A673 (cell line): ENCODE measurements at regions of chr1 and their contacts with region 1.

Region 1: GRCh38 chr1:45656573-45657226 is 29.6 kb downstream of the GPBP1L1 start:
- DNase-seq: no peak
- H3K4me3 ChIP-seq: no peak overlapping the region
- H3K27ac ChIP-seq: no peak overlapping the region
- H3K4me1 ChIP-seq: no peaks in the 10 kb centered on the region
- H3K27me3 ChIP-seq: no peaks in the 10 kb centered on the region
- CTCF ChIP-seq: no peak

Region 2: GRCh38 chr1:45895406-45895805 is 238.7 kb after region 1 on chr1:
- CTCF ChIA-PET with region 1: no interaction called
- POLR2A ChIA-PET with region 1: interaction called, 30 read pairs
- intact Hi-C with region 1: no loop called
- DNase-seq: no peak
- H3K4me3 ChIP-seq: no peak overlapping the region
- H3K27ac ChIP-seq: no peak overlapping the region
- H3K4me1 ChIP-seq: no peaks in the 10 kb centered on the region
- H3K27me3 ChIP-seq: no peaks in the 10 kb centered on the region
- CTCF ChIP-seq: no peak